Psoas muscle (tissue), 8 donors: ENCODE measurements at regions of chr19 and their contacts with region 1.

Region 1: DNA sequence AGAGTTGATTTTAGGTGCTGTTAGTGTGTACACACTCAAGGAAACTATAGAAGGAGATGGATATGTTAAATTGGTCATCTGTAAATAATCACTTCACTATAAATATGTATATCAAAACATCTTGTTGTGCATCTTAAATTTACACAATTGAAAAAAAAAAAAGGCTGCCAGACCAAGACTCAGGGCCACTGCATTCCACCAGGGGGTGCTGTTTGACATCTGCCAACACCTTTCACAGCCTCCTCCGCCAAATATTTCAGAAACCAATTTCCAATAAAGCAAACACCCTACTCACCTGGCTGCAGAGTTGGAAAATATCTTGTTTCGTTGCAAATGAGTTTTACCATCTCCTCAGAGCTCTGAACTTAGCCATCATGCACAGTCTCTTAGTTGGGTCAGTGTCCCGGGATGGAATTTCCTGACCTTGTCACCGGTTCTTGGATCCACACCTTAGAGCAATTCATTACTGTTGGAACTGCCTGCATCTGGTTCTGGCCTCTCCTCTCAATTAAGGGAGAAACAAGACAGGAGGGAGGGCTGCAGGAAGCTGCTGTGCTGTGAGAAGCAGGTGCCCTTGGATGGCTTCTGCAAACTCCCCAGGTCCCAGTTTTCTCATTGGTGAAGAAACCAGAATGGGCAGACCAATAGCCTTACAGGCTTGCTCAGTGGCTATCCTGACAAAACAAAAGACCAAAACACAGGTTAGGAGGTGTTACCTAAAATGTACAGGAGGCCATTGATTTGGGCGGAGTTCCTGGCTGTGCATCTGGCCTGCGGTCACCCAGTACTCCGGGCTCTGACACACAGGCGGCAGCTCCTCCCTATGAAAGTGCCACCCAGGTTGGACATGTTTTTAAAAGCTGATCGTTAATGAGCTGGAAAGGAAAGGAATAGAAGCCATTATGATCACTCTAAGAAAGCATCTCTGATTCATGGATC is 746.6 kb downstream of the UQCRFS1 start:
- DNase-seq: peak; percentile 51 to 74
- ATAC-seq: peak in 3 of 4 donors; percentile 48 to 61 (median 51)
- H3K4me3 ChIP-seq: no peak overlapping the region
- H3K27ac ChIP-seq: no peak overlapping the region
- H3K4me1 ChIP-seq: peaks cover 13% of the 10 kb centered on the region
- H3K27me3 ChIP-seq: no peaks in the 10 kb centered on the region
- CTCF ChIP-seq: peak; percentile 90

Region 2: GRCh38 chr19:28508666-28509065 is 42.3 kb after region 1 on chr19:
- intact Hi-C with region 1: no loop called
- DNase-seq: peak in 1 of 2 donors; percentile 53
- ATAC-seq: peak; percentile 87 to 92 (median 90)
- H3K4me3 ChIP-seq: peak overlapping the region; percentile 46
- H3K27ac ChIP-seq: peak overlapping the region; percentile 89
- H3K4me1 ChIP-seq: peaks cover 9% of the 10 kb centered on the region
- H3K27me3 ChIP-seq: no peaks in the 10 kb centered on the region
- CTCF ChIP-seq: no peak

Region 3: GRCh38 chr19:28523619-28524018 is 57.2 kb after region 1 on chr19:
- intact Hi-C with region 1: loop called in 1 of 2 experiments (anchors 2 kb)
- DNase-seq: no peak
- ATAC-seq: peak in 3 of 4 donors; percentile 48 to 52 (median 48)
- H3K4me3 ChIP-seq: no peak overlapping the region
- H3K27ac ChIP-seq: peak overlapping the region; percentile 76
- H3K4me1 ChIP-seq: peaks cover 44% of the 10 kb centered on the region
- H3K27me3 ChIP-seq: no peaks in the 10 kb centered on the region
- CTCF ChIP-seq: no peak

Region 4: DNA sequence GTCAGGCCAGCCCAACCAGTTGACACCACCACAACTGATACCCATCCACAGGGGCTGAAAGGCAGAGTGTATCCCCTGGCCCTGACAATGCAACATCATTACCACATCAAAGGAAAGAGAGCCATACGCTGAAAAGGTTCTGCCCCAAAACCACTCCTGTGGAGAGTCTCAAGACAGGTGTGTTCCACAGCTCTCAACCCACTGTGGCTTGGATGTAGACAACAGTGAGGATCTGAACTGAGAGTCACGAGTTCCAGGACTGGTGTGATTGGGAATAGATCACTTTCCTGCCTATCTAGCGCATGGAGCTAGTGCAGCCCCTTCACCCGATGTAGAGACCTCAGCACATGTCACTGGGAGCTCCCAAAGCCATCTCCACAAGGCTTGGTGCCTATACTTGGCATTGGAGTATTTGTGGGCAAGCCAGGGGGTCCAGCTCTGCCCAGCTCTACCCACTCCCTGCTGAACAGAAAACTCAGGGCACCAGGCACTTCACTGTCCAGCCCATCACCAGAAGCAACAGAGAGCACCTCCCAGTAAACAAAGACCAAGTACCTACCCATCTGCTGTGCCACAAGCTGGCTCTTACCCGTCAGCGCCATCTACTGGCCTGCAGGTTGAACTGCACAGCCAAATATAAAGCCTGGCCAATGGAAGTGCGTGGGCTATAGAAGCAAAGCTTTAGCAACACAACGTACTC is 167.1 kb after region 1 on chr19:
- intact Hi-C with region 1: loop called (anchors 1 to 2 kb)
- DNase-seq: peak; percentile 41 to 58
- ATAC-seq: peak; percentile 76 to 84 (median 80)
- H3K4me3 ChIP-seq: no peak overlapping the region
- H3K27ac ChIP-seq: no peak overlapping the region
- H3K4me1 ChIP-seq: no peaks in the 10 kb centered on the region
- H3K27me3 ChIP-seq: no peaks in the 10 kb centered on the region
- CTCF ChIP-seq: peak; percentile 90

Region 5: DNA sequence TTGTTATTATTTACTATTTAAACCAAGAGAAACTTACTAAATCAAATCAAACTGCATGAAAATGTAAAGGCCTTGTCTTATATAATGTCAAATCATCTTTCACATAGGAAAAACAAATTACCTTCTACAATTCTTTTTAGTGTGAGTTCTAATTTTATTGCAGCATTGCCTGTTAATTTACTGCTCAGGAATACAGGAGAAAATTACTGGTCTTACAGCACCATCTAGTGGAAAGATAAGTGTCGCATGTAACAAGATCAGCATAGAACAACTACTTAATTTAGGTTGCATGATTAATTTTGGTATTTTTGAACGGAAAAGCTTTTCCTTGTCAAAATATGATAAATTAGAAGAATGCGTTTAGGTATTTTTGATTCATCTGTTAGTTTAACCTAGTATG is 243.9 kb after region 1 on chr19:
- intact Hi-C with region 1: loop called (anchors 2 to 5 kb)
- DNase-seq: no peak
- ATAC-seq: peak in 2 of 4 donors; percentile 54
- H3K4me3 ChIP-seq: no peak overlapping the region
- H3K27ac ChIP-seq: no peak overlapping the region
- H3K4me1 ChIP-seq: no peaks in the 10 kb centered on the region
- H3K27me3 ChIP-seq: peaks cover 0 to 3% (median 0%) of the 10 kb centered on the region in 3 donors
- CTCF ChIP-seq: peak; percentile 74

Region 6: GRCh38 chr19:28878862-28879566 is 412.6 kb after region 1 on chr19:
- intact Hi-C with region 1: loop called in 1 of 2 experiments (anchors 5 kb)
- DNase-seq: peak; percentile 52 to 73
- ATAC-seq: peak in 3 of 4 donors; percentile 37 to 55 (median 46)
- H3K4me3 ChIP-seq: no peak overlapping the region
- H3K27ac ChIP-seq: no peak overlapping the region
- H3K4me1 ChIP-seq: no peaks in the 10 kb centered on the region
- H3K27me3 ChIP-seq: peaks cover 0 to 5% (median 0%) of the 10 kb centered on the region in 3 donors
- CTCF ChIP-seq: peak; percentile 77